MCF 10A (cell line): ENCODE measurements at regions of chr12 and their contacts with region 1.

Region 1: GRCh38 chr12:4857472-4858291 is 52.0 kb upstream of the KCNA1 start:
- DNase-seq: peak; percentile 64
- H3K4me3 Mint-ChIP-seq: no peak overlapping the region
- H3K27ac Mint-ChIP-seq: no peak overlapping the region
- H3K4me1 Mint-ChIP-seq: no peaks in the 10 kb centered on the region
- H3K27me3 Mint-ChIP-seq: peaks cover 47% of the 10 kb centered on the region
- CTCF ChIP-seq: peak; percentile 79

Region 2: DNA sequence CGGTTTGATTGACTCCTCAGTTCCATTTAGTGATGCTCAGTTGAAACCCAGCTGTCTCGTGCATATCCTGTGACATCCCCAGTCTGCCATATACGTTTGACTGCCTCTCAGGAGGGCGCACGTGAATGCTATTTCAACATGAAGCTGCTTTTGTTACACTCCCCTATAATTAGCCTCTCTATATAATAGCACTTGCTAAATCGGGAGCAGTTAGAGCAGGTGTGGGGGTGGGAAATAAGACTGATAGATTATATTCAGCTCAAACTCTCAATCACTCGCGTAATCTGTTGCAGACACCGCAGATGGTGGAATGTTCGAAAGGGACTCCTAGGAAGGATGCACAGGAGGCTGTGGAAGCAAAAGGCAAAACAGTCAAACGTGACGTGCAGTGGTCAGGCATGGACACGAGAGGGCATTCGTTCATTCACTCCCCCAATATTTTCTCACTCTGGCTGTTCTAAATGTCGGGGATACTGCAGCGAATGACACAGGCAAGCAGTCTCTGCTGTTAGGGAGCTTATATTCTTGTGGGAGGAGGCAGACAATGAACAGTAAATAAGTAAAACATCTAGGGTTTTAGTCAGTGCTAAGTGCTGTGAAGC is 81.8 kb after region 1 on chr12:
- CTCF ChIA-PET with region 1: interaction called, 59 read pairs
- POLR2A ChIA-PET with region 1: no interaction called
- intact Hi-C with region 1: no loop called
- DNase-seq: no peak
- H3K4me3 Mint-ChIP-seq: no peak overlapping the region
- H3K27ac Mint-ChIP-seq: no peak overlapping the region
- H3K4me1 Mint-ChIP-seq: no peaks in the 10 kb centered on the region
- H3K27me3 Mint-ChIP-seq: no peaks in the 10 kb centered on the region
- CTCF ChIP-seq: no peak

Region 3: GRCh38 chr12:4987076-4987760 is 129.5 kb after region 1 on chr12:
- CTCF ChIA-PET with region 1: interaction called, 90 read pairs
- POLR2A ChIA-PET with region 1: no interaction called
- intact Hi-C with region 1: no loop called
- DNase-seq: no peak
- H3K4me3 Mint-ChIP-seq: no peak overlapping the region
- H3K27ac Mint-ChIP-seq: no peak overlapping the region
- H3K4me1 Mint-ChIP-seq: no peaks in the 10 kb centered on the region
- H3K27me3 Mint-ChIP-seq: no peaks in the 10 kb centered on the region
- CTCF ChIP-seq: no peak

Region 4: GRCh38 chr12:5003020-5003666 is 145.5 kb after region 1 on chr12:
- CTCF ChIA-PET with region 1: interaction called, 90 read pairs
- POLR2A ChIA-PET with region 1: interaction called, 3 read pairs
- intact Hi-C with region 1: loop called (anchors 1 kb)
- DNase-seq: peak; percentile 57
- H3K4me3 Mint-ChIP-seq: no peak overlapping the region
- H3K27ac Mint-ChIP-seq: no peak overlapping the region
- H3K4me1 Mint-ChIP-seq: no peaks in the 10 kb centered on the region
- H3K27me3 Mint-ChIP-seq: no peaks in the 10 kb centered on the region
- CTCF ChIP-seq: peak; percentile 82

Region 5: DNA sequence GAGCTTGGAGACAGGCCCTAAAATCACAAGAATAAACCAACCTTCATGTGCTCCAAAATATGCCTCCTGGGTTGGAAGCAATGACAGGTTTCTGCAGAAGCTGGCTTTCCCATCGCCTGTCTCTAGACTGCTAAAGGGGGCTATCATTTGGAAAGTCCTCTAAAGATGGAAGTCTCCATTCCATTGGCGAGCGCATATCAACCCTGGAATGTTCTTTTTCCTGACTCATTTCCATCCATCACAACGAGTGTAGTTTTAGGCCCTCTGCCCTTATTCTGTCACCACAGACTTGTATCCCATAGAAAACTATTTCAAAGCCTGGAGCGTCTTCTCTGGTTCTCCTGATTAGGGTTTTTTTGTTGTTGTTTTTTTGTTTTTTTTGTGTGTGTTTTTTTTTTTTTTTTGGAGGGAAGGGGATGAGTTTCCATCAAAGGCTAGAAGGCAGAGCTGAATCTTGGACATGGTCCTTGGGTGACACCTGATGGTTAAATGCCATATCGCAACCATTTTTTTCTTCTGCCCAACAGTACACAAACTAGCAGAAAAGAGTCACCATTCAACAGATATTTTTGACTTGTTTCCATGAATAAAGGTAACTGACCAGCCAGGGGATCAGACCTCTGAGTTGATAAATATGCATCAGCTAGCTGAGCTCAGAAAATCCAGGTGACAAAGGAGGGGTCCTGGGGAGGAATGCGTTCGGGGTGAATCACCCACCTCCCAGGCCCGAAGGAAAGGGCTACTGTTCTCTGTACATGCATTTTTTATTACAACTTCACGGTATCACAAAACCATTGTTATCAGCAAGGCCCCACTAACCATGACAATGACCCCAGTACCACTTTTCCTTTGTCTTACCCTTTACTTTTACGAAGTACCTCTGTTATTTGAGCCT is 226.5 kb after region 1 on chr12:
- CTCF ChIA-PET with region 1: interaction called, 88 read pairs
- POLR2A ChIA-PET with region 1: no interaction called
- intact Hi-C with region 1: loop called (anchors 1 kb)
- DNase-seq: peak; percentile 33
- H3K4me3 Mint-ChIP-seq: no peak overlapping the region
- H3K27ac Mint-ChIP-seq: no peak overlapping the region
- H3K4me1 Mint-ChIP-seq: no peaks in the 10 kb centered on the region
- H3K27me3 Mint-ChIP-seq: no peaks in the 10 kb centered on the region
- CTCF ChIP-seq: peak; percentile 38

Region 6: GRCh38 chr12:5114470-5114869 is 256.8 kb after region 1 on chr12:
- CTCF ChIA-PET with region 1: no interaction called
- POLR2A ChIA-PET with region 1: no interaction called
- intact Hi-C with region 1: no loop called
- DNase-seq: no peak
- H3K4me3 Mint-ChIP-seq: no peak overlapping the region
- H3K27ac Mint-ChIP-seq: no peak overlapping the region
- H3K4me1 Mint-ChIP-seq: no peaks in the 10 kb centered on the region
- H3K27me3 Mint-ChIP-seq: no peaks in the 10 kb centered on the region
- CTCF ChIP-seq: no peak

Region 7: GRCh38 chr12:5716231-5716630 is 858.5 kb after region 1 on chr12:
- CTCF ChIA-PET with region 1: no interaction called
- POLR2A ChIA-PET with region 1: no interaction called
- intact Hi-C with region 1: no loop called
- DNase-seq: no peak
- H3K4me3 Mint-ChIP-seq: no peak overlapping the region
- H3K27ac Mint-ChIP-seq: no peak overlapping the region
- H3K4me1 Mint-ChIP-seq: no peaks in the 10 kb centered on the region
- H3K27me3 Mint-ChIP-seq: no peaks in the 10 kb centered on the region
- CTCF ChIP-seq: no peak